ENCODE measurements at regions of chr10 and their contacts with region 1.

Region 1: GRCh38 chr10:3159152-3159551 is 13.4 kb downstream of the PITRM1 start:
- DNase-seq: no peak
- ATAC-seq: no peak
- H3K4me3 ChIP-seq: no peak overlapping the region
- H3K4me3 Mint-ChIP-seq: no peak overlapping the region
- H3K27ac ChIP-seq: no peak overlapping the region
- H3K27ac Mint-ChIP-seq: no peak overlapping the region
- H3K4me1 ChIP-seq: no peaks in the 10 kb centered on the region
- H3K4me1 Mint-ChIP-seq: no peaks in the 10 kb centered on the region
- H3K27me3 ChIP-seq: no peaks in the 10 kb centered on the region
- H3K27me3 Mint-ChIP-seq: no peaks in the 10 kb centered on the region
- CTCF ChIP-seq: no peak

Region 2: DNA sequence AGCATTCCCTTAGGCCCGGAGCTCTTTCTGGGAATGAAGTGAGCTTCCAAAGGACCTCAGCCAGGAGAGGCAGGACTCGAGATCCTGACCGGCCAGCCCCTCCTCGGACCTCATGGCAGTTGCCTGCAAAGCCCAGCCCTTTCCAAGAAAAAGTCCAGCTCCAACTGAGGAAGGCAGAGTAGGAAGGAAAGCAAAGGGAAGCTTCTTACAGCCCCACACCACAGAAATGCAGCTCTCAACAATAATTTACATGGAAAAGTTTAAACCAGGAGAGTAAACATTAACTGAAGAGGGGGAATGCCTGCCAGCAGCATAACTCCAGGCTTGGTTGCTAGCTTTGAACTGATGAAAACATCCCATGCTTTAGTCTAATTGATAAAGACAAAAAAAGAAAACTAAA is 245.7 kb before region 1 on chr10:
- CTCF ChIA-PET with region 1: no interaction called
- POLR2A ChIA-PET with region 1: no interaction called
- intact Hi-C with region 1: no loop called
- DNase-seq: no peak
- ATAC-seq: no peak
- H3K4me3 ChIP-seq: no peak overlapping the region
- H3K4me3 Mint-ChIP-seq: no peak overlapping the region
- H3K27ac ChIP-seq: no peak overlapping the region
- H3K27ac Mint-ChIP-seq: no peak overlapping the region
- H3K4me1 ChIP-seq: peaks cover 2% of the 10 kb centered on the region
- H3K4me1 Mint-ChIP-seq: peaks cover 23% of the 10 kb centered on the region
- H3K27me3 ChIP-seq: no peaks in the 10 kb centered on the region
- H3K27me3 Mint-ChIP-seq: peaks cover 21% of the 10 kb centered on the region
- CTCF ChIP-seq: no peak

Region 3: GRCh38 chr10:3186368-3186767 is 27.2 kb after region 1 on chr10:
- CTCF ChIA-PET with region 1: no interaction called
- POLR2A ChIA-PET with region 1: no interaction called
- intact Hi-C with region 1: loop called in 1 of 2 experiments (anchors 1 kb)
- DNase-seq: peak in 7 of 9 experiments; percentile 25 to 72 (median 50)
- ATAC-seq: peak; percentile 100
- H3K4me3 ChIP-seq: no peak overlapping the region
- H3K4me3 Mint-ChIP-seq: peak overlapping the region; percentile 30
- H3K27ac ChIP-seq: no peak overlapping the region
- H3K27ac Mint-ChIP-seq: peak overlapping the region; percentile 74
- H3K4me1 ChIP-seq: peaks cover 4% of the 10 kb centered on the region
- H3K4me1 Mint-ChIP-seq: peaks cover 13% of the 10 kb centered on the region
- H3K27me3 ChIP-seq: no peaks in the 10 kb centered on the region
- H3K27me3 Mint-ChIP-seq: no peaks in the 10 kb centered on the region
- CTCF ChIP-seq: no peak